Naive thymus-derived CD8-positive, alpha-beta T cell (primary cell): ENCODE measurements at regions of chr12 and their contacts with region 1.

Region 1: GRCh38 chr12:106357549-106358395 is at the start of gene POLR3B:
- DNase-seq: peak; percentile 90 to 100 (median 96)
- ATAC-seq: peak; percentile 93 to 94
- H3K4me3 Mint-ChIP-seq: peak within 1 kb of the TSS; percentile 82 to 97 (median 93)
- H3K27ac Mint-ChIP-seq: peak within 1 kb of the TSS; percentile 80 to 97 (median 93)
- H3K4me1 Mint-ChIP-seq: peaks cover 10 to 20% (median 19%) of the 10 kb centered on the region in 4 donors
- H3K27me3 Mint-ChIP-seq: peaks cover 0 to 3% (median 0%) of the 10 kb centered on the region in 5 donors
- polyA plus RNA-seq, gene POLR3B: 3.1 to 6.2 (median 4.2) TPM

Region 2: GRCh38 chr12:106213662-106214061 is 144.1 kb before region 1 on chr12:
- POLR2A ChIA-PET with region 1: no interaction called
- DNase-seq: no peak
- ATAC-seq: no peak
- H3K4me3 Mint-ChIP-seq: no peak overlapping the region
- H3K27ac Mint-ChIP-seq: peak overlapping the region in 1 of 10 donors; percentile 27
- H3K4me1 Mint-ChIP-seq: peaks cover 0 to 1% (median 0%) of the 10 kb centered on the region in 4 donors
- H3K27me3 Mint-ChIP-seq: peaks cover 25 to 48% (median 46%) of the 10 kb centered on the region in 5 donors

Region 3: DNA sequence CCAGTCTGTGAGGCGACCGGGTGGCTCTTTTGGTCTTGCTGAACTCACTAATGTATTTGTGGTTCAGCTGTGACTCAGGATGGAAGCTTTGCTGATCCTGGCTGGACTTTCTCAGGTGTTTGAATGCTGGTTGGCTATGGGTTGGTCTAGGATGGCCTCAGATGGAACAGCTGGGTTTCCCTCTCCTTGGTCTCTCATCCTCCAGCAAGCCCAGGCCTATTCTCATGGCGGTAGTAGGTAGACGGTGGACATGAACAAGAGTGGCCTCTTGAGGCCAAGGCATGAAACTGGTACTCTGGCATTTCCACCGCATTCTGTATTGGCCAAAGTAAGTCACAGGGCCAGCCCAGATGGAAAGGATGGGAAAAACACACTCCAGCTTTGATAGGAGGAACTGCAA is 12.0 kb before region 1 on chr12:
- POLR2A ChIA-PET with region 1: interaction called, 12 read pairs
- DNase-seq: peak in 1 of 10 donors; percentile 17
- ATAC-seq: peak in 1 of 2 donors; percentile 46
- H3K4me3 Mint-ChIP-seq: no peak overlapping the region
- H3K27ac Mint-ChIP-seq: peak overlapping the region in 4 of 10 donors; percentile 50 to 73 (median 56)
- H3K4me1 Mint-ChIP-seq: peaks cover 0 to 6% (median 5%) of the 10 kb centered on the region in 4 donors
- H3K27me3 Mint-ChIP-seq: no peaks in the 10 kb centered on the region